Activated CD4-positive, alpha-beta T cell treated with anti-CD3 and anti-CD28 coated beads for 36 hours (primary cell): ENCODE measurements at regions of chr5 and their contacts with region 1.

Region 1: GRCh38 chr5:132500931-132501630 is 10.5 kb upstream of the IRF1 start:
- DNase-seq: peak; percentile 85
- ATAC-seq: peak; percentile 34
- H3K4me3 Mint-ChIP-seq: no peak overlapping the region
- H3K27ac Mint-ChIP-seq: no peak overlapping the region
- H3K4me1 Mint-ChIP-seq: peaks cover 22% of the 10 kb centered on the region
- H3K27me3 Mint-ChIP-seq: no peaks in the 10 kb centered on the region

Region 2: GRCh38 chr5:132238169-132238744 is 262.8 kb before region 1 on chr5:
- CTCF ChIA-PET with region 1: interaction called, 15 read pairs
- POLR2A ChIA-PET with region 1: no interaction called
- intact Hi-C with region 1: loop called (anchors 1 kb)
- DNase-seq: peak; percentile 89
- ATAC-seq: peak; percentile 95
- H3K4me3 Mint-ChIP-seq: no peak overlapping the region
- H3K27ac Mint-ChIP-seq: no peak overlapping the region
- H3K4me1 Mint-ChIP-seq: no peaks in the 10 kb centered on the region
- H3K27me3 Mint-ChIP-seq: peaks cover 6% of the 10 kb centered on the region

Region 3: DNA sequence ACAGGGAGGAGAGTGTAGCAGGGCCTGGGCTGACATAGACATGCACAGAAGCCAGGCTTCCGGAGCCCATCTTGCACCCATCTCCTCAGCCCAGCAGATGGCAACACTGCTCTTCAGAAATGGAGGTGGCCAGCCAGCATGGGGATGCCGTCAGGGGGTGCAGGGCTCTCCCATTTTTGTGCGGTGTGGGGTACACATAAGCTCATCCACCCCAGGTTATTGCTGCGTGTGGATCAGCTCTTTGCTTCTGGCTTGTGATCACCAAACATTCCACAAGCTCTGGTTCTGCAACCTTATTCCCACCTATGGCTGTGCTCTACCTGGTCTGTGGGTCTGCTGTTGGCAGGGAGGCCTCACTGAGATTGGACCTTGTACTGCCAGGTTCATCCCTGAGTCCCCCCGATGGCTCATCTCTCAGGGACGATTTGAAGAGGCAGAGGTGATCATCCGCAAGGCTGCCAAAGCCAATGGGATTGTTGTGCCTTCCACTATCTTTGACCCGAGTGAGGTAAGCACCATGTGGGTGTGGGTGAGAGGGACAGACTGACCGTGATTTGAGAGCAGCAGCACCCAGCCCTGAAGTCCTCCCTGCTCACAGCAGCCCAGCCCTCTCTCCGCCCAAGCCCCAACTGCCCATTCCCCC is 114.3 kb before region 1 on chr5:
- CTCF ChIA-PET with region 1: interaction called, 308 read pairs
- POLR2A ChIA-PET with region 1: interaction called, 7 read pairs
- intact Hi-C with region 1: loop called (anchors 1 kb)
- DNase-seq: peak; percentile 88
- ATAC-seq: peak; percentile 87
- H3K4me3 Mint-ChIP-seq: no peak overlapping the region
- H3K27ac Mint-ChIP-seq: peak overlapping the region; percentile 29
- H3K4me1 Mint-ChIP-seq: peaks cover 40% of the 10 kb centered on the region
- H3K27me3 Mint-ChIP-seq: no peaks in the 10 kb centered on the region

Region 4: GRCh38 chr5:132419502-132420468 is 81.3 kb before region 1 on chr5:
- CTCF ChIA-PET with region 1: interaction called, 11 read pairs
- POLR2A ChIA-PET with region 1: no interaction called
- intact Hi-C with region 1: loop called in 1 of 2 experiments (anchors 1 kb)
- DNase-seq: peak; percentile 75
- ATAC-seq: peak; percentile 65
- H3K4me3 Mint-ChIP-seq: peak overlapping the region; percentile 37
- H3K27ac Mint-ChIP-seq: peak overlapping the region; percentile 90
- H3K4me1 Mint-ChIP-seq: peaks cover 83% of the 10 kb centered on the region
- H3K27me3 Mint-ChIP-seq: no peaks in the 10 kb centered on the region

Region 5: DNA sequence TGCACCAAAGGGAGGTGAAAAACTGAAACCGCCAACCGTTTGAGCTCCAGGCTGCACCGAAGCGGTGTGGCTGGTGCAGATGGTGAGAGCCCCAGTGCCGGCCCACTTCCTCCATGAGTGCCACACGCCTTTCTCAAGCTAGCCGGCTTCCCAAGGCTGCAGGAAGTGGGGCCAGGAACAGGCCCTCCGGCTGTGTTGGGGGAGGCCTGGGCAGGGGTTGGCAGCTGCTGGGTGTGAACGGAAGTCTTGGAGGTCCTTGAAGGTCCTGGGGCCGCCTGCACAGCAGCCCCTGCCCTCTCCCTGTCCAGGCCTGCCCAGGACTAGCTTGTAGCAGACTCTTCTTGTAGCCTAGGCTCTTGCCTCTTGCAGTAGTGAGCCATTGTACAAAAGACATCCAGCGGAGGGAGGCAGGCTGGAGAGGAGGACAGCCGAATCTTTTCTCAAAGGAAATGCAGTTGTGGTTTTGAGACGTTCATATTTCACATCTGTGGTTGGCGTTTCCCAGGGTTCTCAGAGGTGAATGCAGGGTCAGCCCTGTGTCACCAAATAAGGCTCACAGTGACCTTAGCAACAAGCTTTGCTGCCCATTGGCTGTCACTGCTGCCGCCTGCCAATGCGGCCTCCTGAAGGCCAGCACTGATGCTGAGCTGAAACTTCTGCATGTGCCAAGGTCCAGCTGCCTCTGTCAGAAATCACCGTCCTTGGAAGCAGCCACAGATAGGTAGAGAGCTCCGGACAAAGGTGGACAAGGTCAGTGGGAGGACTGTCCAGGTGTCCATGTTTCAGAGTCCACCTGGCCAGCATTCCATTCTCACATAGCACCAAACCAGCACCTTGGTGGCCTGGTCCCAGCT is 34.4 kb before region 1 on chr5:
- CTCF ChIA-PET with region 1: interaction called, 16 read pairs
- POLR2A ChIA-PET with region 1: interaction called, 4 read pairs
- intact Hi-C with region 1: no loop called
- DNase-seq: peak; percentile 78
- ATAC-seq: peak; percentile 61
- H3K4me3 Mint-ChIP-seq: peak overlapping the region; percentile 51
- H3K27ac Mint-ChIP-seq: peak overlapping the region; percentile 51
- H3K4me1 Mint-ChIP-seq: peaks cover 88% of the 10 kb centered on the region
- H3K27me3 Mint-ChIP-seq: no peaks in the 10 kb centered on the region